Lower leg skin (tissue), 4 donors: ENCODE measurements at regions of chr3 and their contacts with region 1.

Region 1: GRCh38 chr3:63847718-63848450 is 15.7 kb downstream of the THOC7 start:
- DNase-seq: no peak
- H3K4me3 ChIP-seq: no peak overlapping the region
- CTCF ChIP-seq: no peak
- POLR2A ChIP-seq: no peak

Region 2: DNA sequence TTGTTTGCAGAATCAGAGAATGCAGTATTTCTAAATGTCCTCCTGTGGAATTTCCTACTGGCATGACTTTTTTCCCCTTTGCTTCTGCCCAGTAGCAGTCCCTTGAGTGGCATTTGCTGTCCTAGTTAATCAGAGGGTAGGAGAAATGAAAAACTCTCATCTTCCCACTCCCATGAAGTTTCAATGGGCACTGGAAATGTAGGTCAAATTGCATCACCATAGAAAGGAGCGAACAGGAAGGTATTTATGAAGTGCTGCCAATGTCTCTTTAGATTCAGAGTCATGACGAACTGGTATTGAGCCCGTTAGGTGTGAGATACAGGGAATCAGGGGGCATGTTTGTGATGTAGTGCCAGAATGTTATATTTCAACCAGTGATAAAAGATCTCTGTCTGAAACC is 39.0 kb after region 1 on chr3:
- intact Hi-C with region 1: no loop called
- DNase-seq: no peak
- H3K4me3 ChIP-seq: no peak overlapping the region
- CTCF ChIP-seq: no peak
- POLR2A ChIP-seq: no peak

Region 3: GRCh38 chr3:63951492-63952247 is 103.8 kb after region 1 on chr3:
- intact Hi-C with region 1: no loop called
- DNase-seq: no peak
- H3K4me3 ChIP-seq: no peak overlapping the region
- CTCF ChIP-seq: no peak
- POLR2A ChIP-seq: no peak

Region 4: DNA sequence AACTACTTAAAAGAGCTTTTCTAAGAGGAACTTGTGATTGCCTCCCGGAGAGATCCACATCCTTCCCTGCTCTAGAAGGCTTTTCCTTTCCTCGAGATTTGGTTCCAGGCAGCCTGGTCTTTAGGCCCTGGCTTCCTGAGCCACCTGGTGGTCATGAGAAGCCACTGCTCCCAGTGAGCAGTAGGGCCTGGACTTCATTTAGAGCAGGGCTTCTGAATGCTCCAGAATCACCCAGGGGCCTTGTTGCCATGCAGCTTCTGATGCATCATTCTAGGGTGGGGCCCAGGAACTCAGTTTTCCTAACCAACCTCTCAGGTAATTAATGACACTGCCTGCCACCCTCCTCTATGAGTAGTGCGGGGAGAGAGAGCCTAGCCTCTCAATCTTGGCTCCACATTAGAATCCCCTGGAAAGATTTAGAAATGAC is 145.8 kb after region 1 on chr3:
- intact Hi-C with region 1: loop called (anchors 10 kb)
- DNase-seq: peak; percentile 71 to 88
- H3K4me3 ChIP-seq: no peak overlapping the region
- CTCF ChIP-seq: peak in 1 of 3 donors; percentile 63
- POLR2A ChIP-seq: no peak